ENCODE measurements at regions of chrX and their contacts with region 1.

Region 1: DNA sequence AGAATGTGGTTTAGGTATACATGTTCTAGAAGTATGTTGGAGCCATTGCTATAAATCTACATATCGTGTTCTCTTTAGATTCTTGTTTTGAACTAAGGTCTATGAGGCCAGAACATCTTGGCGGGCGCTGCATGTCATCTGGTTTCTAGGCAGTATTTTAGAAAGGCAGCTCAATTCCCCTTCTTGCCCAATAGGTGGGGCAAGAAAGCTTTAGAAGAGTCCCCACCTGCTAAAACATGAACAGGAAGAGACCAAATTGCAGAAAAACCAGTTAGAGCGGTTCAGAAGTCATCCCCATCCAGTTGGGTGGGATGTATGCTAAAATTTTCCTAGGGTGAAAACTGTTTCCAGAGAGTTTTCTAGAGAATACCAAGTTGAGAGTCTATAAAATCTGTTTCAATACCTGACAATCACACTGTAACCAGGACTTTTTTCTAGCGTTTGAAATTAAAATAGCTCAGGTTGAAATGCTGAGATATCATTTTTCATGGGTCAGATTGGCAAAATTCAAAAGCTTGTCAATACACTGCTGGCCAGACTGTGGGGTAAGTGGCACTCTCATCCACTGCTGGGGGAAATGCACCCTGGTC is 17.5 kb upstream of the SH3KBP1 start:
- DNase-seq: peak; percentile 30
- H3K4me3 Mint-ChIP-seq: no peak overlapping the region
- H3K27ac Mint-ChIP-seq: no peak overlapping the region
- H3K4me1 Mint-ChIP-seq: peaks cover 9% of the 10 kb centered on the region
- H3K27me3 Mint-ChIP-seq: no peaks in the 10 kb centered on the region

Region 2: GRCh38 chrX:20066968-20067708 is 162.3 kb after region 1 on chrX:
- CTCF ChIA-PET with region 1: interaction called, 7 read pairs
- intact Hi-C with region 1: loop called (anchors 1 kb)
- DNase-seq: peak; percentile 44
- H3K4me3 Mint-ChIP-seq: no peak overlapping the region
- H3K27ac Mint-ChIP-seq: no peak overlapping the region
- H3K4me1 Mint-ChIP-seq: no peaks in the 10 kb centered on the region
- H3K27me3 Mint-ChIP-seq: no peaks in the 10 kb centered on the region

Region 3: DNA sequence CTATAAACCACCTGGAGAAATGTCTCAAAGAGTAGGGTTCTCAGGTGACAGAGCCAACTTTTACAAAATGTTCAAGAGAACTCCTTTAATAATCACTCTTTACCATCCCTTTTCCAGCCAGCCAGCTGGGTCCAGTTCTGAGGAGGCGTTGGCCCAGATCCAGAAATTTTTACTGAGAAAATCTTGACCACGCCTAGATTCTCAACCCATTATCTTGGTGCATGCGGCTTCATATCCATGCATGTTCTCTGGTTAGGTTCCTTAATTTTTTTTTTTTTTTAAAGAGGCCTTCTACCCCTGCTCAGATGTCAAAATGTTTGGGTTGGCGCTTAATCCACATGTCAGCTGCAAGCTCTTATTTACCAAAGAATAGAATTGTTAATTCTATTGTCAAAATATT is 223.8 kb after region 1 on chrX:
- CTCF ChIA-PET with region 1: interaction called, 3 read pairs
- intact Hi-C with region 1: loop called (anchors 5 kb)
- DNase-seq: no peak
- H3K4me3 Mint-ChIP-seq: no peak overlapping the region
- H3K27ac Mint-ChIP-seq: no peak overlapping the region
- H3K4me1 Mint-ChIP-seq: peaks cover 3% of the 10 kb centered on the region
- H3K27me3 Mint-ChIP-seq: no peaks in the 10 kb centered on the region